ENCODE measurements at regions of chr4 and their contacts with region 1.

Region 1: DNA sequence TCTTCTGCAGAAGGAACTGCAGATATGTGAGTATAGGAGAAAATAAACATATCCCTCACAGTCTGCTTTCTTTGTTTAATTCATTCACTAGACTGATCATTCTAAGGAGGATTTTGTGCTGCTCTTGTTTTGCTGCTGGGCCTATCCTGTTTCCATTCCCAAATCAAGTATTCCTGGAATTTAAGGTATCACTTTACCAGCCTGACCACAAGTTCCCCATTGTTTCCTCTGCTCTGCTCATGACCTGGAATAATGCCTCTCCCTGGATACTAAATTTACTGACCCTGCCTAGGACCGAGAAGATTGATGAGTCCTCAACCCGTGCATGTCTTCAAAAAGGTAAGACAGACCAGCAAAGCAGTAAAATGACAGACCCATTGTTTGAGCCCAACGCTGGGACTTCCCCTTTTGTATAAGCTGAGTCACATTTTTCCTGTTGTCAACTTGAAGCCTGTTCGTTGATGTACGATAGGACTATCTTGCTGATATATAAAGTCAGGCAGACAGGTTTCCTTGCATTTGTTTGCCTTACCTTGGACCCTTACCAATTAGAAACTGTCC is 85.5 kb upstream of the TET2 start:
- DNase-seq: peak; percentile 36 to 53
- H3K4me3 ChIP-seq: no peak overlapping the region
- H3K27ac ChIP-seq: no peak overlapping the region
- H3K4me1 ChIP-seq: peaks cover 17% of the 10 kb centered on the region
- H3K27me3 ChIP-seq: no peaks in the 10 kb centered on the region
- CTCF ChIP-seq: no peak

Region 2: GRCh38 chr4:104879367-104879766 is 181.8 kb before region 1 on chr4:
- CTCF ChIA-PET with region 1: no interaction called
- POLR2A ChIA-PET with region 1: no interaction called
- intact Hi-C with region 1: loop called (anchors 10 kb)
- DNase-seq: peak in 1 of 2 experiments; percentile 9
- H3K4me3 ChIP-seq: no peak overlapping the region
- H3K27ac ChIP-seq: no peak overlapping the region
- H3K4me1 ChIP-seq: no peaks in the 10 kb centered on the region; the same call in 1 of the 2 replicates
- H3K27me3 ChIP-seq: no peaks in the 10 kb centered on the region
- CTCF ChIP-seq: no peak

Region 3: GRCh38 chr4:104966349-104967033 is 94.7 kb before region 1 on chr4:
- CTCF ChIA-PET with region 1: no interaction called
- POLR2A ChIA-PET with region 1: no interaction called
- intact Hi-C with region 1: loop called (anchors 2 kb)
- DNase-seq: peak; percentile 2 to 62
- H3K4me3 ChIP-seq: no peak overlapping the region; the same call in 1 of the 2 replicates
- H3K27ac ChIP-seq: peak overlapping the region; percentile 79
- H3K4me1 ChIP-seq: peaks cover 20% of the 10 kb centered on the region
- H3K27me3 ChIP-seq: no peaks in the 10 kb centered on the region
- CTCF ChIP-seq: no peak

Region 4: GRCh38 chr4:105135785-105136184 is 74.6 kb after region 1 on chr4:
- CTCF ChIA-PET with region 1: no interaction called
- POLR2A ChIA-PET with region 1: no interaction called
- intact Hi-C with region 1: no loop called
- DNase-seq: no peak
- H3K4me3 ChIP-seq: no peak overlapping the region
- H3K27ac ChIP-seq: no peak overlapping the region
- H3K4me1 ChIP-seq: no peaks in the 10 kb centered on the region
- H3K27me3 ChIP-seq: no peaks in the 10 kb centered on the region
- CTCF ChIP-seq: no peak

Region 5: DNA sequence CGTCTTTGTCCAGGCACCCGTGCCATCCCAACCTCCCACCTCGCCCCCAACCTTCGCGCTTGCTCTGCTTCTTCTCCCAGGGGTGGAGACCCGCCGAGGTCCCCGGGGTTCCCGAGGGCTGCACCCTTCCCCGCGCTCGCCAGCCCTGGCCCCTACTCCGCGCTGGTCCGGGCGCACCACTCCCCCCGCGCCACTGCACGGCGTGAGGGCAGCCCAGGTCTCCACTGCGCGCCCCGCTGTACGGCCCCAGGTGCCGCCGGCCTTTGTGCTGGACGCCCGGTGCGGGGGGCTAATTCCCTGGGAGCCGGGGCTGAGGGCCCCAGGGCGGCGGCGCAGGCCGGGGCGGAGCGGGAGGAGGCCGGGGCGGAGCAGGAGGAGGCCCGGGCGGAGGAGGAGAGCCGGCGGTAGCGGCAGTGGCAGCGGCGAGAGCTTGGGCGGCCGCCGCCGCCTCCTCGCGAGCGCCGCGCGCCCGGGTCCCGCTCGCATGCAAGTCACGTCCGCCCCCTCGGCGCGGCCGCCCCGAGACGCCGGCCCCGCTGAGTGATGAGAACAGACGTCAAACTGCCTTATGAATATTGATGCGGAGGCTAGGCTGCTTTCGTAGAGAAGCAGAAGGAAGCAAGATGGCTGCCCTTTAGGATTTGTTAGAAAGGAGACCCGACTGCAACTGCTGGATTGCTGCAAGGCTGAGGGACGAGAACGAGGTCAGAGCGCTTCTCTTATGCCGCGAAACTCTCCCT is 85.2 kb after region 1 on chr4 and contains the start of gene TET2:
- CTCF ChIA-PET with region 1: no interaction called
- POLR2A ChIA-PET with region 1: no interaction called
- intact Hi-C with region 1: loop called (anchors 2 kb)
- DNase-seq: peak; percentile 43 to 55
- H3K4me3 ChIP-seq: peak within 1 kb of the TSS; percentile 97
- H3K27ac ChIP-seq: peak within 1 kb of the TSS; percentile 34; the same call in 1 of the 2 replicates
- H3K4me1 ChIP-seq: peaks cover 19% of the 10 kb centered on the region; the same call in 1 of the 2 replicates
- H3K27me3 ChIP-seq: no peaks in the 10 kb centered on the region
- CTCF ChIP-seq: no peak
- total RNA-seq, gene TET2: 5.2 and 6.6 TPM in 2 replicates